PC-9 (cell line): ENCODE measurements at regions of chr18 and their contacts with region 1.

Region 1: DNA sequence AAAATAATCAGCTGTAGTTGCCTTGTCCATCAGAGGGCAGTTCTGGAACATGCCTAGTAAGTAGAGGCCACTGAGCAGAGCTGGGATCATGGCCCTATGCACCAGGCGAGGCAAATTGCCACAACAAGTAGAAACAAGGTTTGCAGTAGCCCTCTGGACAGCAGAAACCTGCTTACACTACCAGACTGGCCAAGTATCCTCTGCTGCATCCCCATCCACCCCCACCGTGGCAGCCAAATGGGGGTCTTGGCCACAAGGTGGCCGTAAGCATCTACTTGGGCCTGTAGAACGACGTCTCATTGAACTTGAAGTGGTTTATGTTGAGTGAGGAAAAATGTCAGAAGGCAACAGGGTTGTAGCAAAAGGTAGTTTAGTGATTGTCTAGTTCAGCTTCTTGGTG is 241.2 kb downstream of the ALPK2 start:
- DNase-seq: no peak
- H3K4me3 ChIP-seq: no peak overlapping the region
- H3K27ac ChIP-seq: no peak overlapping the region
- H3K4me1 ChIP-seq: no peaks in the 10 kb centered on the region
- H3K27me3 ChIP-seq: no peaks in the 10 kb centered on the region
- CTCF ChIP-seq: no peak

Region 2: DNA sequence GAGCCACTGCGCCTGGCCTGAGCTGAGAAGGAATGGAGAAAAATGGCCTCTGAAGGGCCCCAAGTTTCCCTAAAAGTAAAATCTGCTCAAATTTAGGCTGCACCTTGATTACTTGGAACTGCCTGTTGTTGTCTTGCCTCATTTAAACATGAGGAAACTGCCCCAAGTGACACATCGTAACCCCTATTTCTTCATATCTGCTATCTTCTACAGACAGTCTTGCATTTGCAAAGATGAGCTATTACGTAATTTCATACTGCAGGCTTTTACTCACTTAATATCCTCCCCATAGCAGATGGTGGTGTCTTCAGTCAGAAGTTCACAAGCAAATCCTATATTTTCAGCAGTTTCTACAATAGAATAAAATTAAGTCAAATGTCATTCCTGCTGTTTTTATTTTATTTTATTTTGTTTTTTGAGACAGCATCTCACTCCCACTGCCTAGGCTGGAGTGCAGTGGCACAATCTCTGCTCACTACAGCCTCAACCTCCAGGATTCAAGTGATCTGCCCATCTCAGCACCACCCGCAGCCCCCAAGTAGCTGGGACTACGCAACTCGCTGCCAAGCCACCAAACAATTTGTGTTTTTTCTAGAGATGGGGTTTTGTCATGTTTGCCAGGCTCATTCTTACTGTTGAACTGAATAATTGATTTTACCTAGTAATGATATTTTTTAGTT is 720.8 kb before region 1 on chr18:
- CTCF ChIA-PET with region 1: no interaction called
- POLR2A ChIA-PET with region 1: interaction called, 20 read pairs
- intact Hi-C with region 1: no loop called
- DNase-seq: no peak
- H3K4me3 ChIP-seq: no peak overlapping the region
- H3K27ac ChIP-seq: no peak overlapping the region
- H3K4me1 ChIP-seq: no peaks in the 10 kb centered on the region
- H3K27me3 ChIP-seq: no peaks in the 10 kb centered on the region
- CTCF ChIP-seq: no peak

Region 3: DNA sequence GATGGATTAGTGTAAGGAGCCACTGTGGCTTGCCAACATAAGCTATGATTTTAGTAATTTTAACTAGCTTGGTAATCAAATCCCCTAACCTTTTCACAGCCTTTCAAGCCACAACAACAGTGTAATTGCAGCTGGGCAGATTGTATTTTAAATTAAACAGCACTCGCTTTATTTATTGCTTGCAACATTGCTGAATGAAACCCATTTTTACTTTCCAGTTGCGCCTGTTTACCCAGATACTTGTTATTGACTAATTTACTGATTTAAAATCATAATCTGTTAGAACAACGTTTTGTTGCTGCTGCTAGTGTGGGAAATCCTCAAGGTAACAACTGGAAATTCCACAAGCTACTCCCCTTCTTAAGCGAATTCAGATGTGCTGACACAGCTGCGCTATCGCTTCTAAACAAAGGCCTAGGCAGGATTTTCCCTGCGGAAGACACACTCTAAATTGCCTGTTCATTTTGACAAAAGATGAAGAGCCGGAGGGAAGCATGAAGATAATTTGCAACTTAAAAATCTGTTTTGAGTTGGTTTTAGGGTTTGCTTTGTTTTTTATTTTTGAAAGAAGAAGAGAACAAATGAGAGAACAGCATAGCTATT is 42.8 kb before region 1 on chr18:
- CTCF ChIA-PET with region 1: no interaction called
- POLR2A ChIA-PET with region 1: no interaction called
- intact Hi-C with region 1: no loop called
- DNase-seq: no peak
- H3K4me3 ChIP-seq: no peak overlapping the region
- H3K27ac ChIP-seq: no peak overlapping the region
- H3K4me1 ChIP-seq: no peaks in the 10 kb centered on the region
- H3K27me3 ChIP-seq: no peaks in the 10 kb centered on the region
- CTCF ChIP-seq: no peak